Head of caudate nucleus (tissue), 42 donors: ENCODE measurements at regions of chr1 and their contacts with region 1.

Region 1: GRCh38 chr1:247103859-247104591 is at the start of gene ZNF669:
- DNase-seq: peak; percentile 96 to 99 (median 98)

Region 2: DNA sequence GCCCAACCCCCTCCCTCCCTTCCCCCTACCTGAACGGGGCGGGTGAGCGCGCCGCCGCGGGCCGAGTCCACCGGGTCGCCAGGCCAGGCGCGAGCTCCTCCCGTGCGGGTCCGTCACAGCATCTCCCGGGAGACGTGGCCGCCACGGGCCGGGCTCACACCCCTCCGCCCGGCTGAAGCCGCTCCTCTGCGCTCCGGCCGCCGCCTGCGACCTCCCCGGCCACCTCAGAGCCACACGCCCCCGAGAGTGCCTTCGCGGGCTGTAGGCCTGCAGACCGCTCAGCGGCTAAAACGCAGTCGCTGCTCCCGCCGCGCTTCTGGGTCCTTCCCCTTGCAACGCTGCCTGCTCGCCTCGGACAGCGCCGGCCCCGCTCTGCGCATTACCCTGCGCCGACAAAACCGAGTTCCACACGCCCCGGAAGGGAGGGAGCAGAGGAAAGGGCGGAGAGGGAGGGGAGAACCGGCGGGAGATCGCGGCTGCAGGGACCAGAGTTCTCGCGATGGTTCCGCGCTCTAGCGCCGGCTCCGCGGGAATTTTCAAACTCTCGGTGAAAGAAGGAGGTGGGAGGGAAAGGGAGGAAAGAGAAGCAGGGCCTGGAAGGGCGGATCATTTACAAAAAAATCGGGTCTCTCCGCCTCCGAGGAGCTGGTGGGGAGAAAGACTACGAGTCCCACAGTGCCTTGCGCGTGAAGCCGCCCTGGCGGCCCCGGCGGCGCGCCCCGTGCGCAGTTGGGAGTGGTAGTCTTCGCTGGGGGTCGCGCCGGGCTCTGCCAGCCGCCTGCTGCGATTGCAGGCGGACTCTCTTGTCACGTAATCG is 172.3 kb before region 1 on chr1 and contains the start of gene AHCTF1:
- intact Hi-C with region 1: loop called (anchors 10 kb)
- DNase-seq: peak; percentile 90 to 99 (median 97)

Region 3: GRCh38 chr1:247681288-247681897 is 577.4 kb after region 1 on chr1:
- intact Hi-C with region 1: no loop called
- DNase-seq: peak in 32 of 42 donors; percentile 3 to 77 (median 34)